ENCODE measurements at regions of chr16 and their contacts with region 1.

Region 1: GRCh38 chr16:70737377-70738082 is 51.7 kb upstream of the MTSS2 start:
- DNase-seq: peak; percentile 81 to 83
- ATAC-seq: peak; percentile 66 to 80 (median 70)
- H3K4me3 ChIP-seq: peak overlapping the region; percentile 22
- H3K27ac ChIP-seq: peak overlapping the region; percentile 98
- H3K4me1 ChIP-seq: peaks cover 54% of the 10 kb centered on the region
- H3K27me3 ChIP-seq: no peaks in the 10 kb centered on the region
- CTCF ChIP-seq: no peak

Region 2: DNA sequence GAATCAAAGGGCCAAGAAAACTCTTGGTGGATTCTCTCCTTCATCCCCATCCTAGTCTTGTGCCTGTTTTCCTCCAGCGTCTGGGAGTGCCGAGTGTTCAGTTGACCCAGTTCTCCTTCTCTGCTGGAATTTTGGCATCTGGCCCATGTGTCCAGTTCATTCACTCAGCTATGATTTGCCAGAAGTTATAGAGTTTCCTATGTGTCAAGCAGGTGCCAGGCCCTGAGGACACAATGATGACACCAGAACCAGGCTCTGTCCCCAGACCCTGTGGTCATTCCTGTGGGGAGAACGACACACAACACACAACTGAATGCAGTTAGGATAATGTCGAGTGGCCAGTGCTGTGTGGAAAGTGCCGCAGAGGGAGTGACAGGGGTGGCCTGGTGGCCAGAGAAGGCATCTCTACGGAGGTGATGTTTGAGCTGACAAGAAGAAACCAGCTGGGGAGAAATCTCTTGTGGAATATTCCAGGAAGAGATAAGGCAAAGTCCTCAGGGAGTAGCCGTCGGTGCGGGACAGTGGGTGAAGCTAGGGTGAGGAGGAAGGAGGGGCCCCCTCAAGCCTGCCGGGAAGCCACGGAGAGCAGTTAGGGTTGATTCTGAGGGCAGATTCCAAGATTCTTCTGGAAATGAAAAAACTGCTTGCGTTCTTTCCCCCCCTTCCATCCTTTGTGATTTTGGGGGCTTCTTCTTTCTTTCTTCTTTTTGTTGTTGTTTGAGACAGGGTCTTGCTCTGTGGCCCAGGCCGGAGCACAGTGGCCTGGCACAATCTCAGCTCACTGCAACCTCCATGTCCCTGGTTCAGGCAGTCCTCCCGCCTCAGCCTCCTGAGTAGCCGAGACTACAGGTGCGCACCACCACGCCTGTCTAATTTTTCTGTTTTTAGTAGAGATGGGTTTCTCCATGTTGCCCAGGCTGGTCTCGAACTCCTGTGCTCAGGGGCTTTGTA is 127.0 kb before region 1 on chr16:
- intact Hi-C with region 1: no loop called
- DNase-seq: peak; percentile 53 to 78
- ATAC-seq: peak; percentile 93 to 97 (median 94)
- H3K4me3 ChIP-seq: no peak overlapping the region
- H3K27ac ChIP-seq: peak overlapping the region; percentile 36
- H3K4me1 ChIP-seq: peaks cover 14% of the 10 kb centered on the region
- H3K27me3 ChIP-seq: no peaks in the 10 kb centered on the region
- CTCF ChIP-seq: no peak

Region 3: DNA sequence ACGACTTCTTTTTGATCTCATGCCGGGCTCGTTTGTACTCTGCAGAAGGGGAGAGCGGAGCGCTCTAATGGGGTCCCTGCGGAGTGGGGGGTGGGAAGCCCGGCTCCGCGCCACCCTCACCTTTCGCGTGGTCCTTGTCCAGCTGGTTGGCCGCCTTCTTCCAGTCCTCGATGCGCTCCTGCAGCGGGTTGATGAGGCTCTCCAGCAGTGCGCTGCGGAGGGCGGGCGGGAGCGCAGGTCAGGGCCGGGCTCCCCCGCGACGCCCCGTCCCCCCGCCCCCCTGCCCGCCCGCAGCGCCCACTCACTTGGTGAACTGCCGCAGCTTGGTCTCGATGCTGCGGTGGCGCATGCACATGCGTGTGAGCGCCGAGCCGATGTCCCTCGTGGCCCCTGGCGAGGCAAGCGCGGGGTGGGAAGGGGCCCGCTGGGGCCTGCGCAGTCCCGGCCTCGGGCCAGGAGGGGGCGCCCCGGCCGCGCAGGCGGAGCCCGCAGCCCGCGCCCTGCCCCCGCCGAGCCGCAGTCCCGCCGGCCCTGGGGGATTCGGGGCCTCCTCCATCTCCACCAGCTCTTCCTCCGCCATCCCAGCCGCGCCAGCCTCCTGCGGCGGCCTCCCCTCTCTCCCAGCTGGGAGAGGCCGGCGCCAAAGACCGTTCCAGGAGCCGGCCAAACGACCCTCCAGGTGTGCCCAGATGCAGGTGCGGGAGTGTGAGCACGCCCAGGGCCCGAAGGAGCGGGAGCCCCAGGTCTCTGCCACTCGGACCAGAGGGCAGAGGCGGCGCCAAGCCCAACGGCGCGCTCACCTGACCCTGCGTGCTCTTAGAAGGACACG is 57.6 kb before region 1 on chr16:
- intact Hi-C with region 1: loop called in 1 of 2 experiments (anchors 2 kb)
- DNase-seq: peak; percentile 47 to 72
- ATAC-seq: peak; percentile 57 to 68 (median 60)
- H3K4me3 ChIP-seq: no peak overlapping the region
- H3K27ac ChIP-seq: peak overlapping the region; percentile 61
- H3K4me1 ChIP-seq: peaks cover 38% of the 10 kb centered on the region
- H3K27me3 ChIP-seq: no peaks in the 10 kb centered on the region
- CTCF ChIP-seq: peak; percentile 58

Region 4: DNA sequence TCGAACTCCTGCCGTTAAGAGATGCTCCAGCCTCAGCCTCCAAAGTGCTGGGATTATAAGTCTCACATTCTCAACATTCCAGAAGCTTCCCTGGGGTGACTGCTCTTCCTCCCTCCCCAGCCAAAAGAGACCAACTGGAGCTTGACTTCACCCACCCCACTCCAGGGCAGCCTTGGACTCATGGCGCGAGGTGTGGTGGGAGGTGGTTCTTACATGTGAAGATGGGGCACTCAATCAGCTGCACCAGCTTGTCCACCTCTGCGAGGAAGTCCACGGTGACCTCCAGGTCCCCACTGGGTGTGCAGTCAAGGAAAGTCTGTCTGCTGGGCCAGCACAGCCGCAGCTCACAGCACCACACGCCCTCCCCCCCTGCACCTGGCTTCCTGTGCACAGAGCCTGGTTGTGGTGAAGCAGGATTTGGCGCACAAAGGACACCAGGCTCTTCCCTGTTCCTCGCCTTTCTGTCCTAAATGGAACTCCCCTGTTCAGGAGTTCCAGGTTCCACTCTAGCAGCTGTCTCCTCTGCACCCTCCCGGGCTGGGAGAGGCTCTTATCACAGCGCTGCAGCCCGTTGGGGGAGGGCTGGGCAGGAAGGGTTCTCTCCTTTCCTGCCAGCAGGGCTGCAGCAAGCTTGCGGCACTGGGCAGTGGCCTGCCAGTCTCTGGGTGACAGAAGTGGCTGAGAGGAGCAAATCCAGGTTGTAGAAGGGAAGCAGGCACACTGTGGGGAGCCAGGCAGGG is 42.0 kb before region 1 on chr16:
- intact Hi-C with region 1: loop called (anchors 5 kb)
- DNase-seq: peak; percentile 54 to 81
- ATAC-seq: peak; percentile 35 to 57 (median 44)
- H3K4me3 ChIP-seq: no peak overlapping the region
- H3K27ac ChIP-seq: peak overlapping the region; percentile 86
- H3K4me1 ChIP-seq: peaks cover 96% of the 10 kb centered on the region
- H3K27me3 ChIP-seq: no peaks in the 10 kb centered on the region
- CTCF ChIP-seq: no peak

Region 5: GRCh38 chr16:70703041-70703834 is 34.3 kb before region 1 on chr16:
- intact Hi-C with region 1: loop called (anchors 5 kb)
- DNase-seq: peak; percentile 75 to 86
- ATAC-seq: peak; percentile 68 to 80 (median 78)
- H3K4me3 ChIP-seq: no peak overlapping the region
- H3K27ac ChIP-seq: peak overlapping the region; percentile 85
- H3K4me1 ChIP-seq: peaks cover 62% of the 10 kb centered on the region
- H3K27me3 ChIP-seq: no peaks in the 10 kb centered on the region
- CTCF ChIP-seq: peak; percentile 35

Region 6: DNA sequence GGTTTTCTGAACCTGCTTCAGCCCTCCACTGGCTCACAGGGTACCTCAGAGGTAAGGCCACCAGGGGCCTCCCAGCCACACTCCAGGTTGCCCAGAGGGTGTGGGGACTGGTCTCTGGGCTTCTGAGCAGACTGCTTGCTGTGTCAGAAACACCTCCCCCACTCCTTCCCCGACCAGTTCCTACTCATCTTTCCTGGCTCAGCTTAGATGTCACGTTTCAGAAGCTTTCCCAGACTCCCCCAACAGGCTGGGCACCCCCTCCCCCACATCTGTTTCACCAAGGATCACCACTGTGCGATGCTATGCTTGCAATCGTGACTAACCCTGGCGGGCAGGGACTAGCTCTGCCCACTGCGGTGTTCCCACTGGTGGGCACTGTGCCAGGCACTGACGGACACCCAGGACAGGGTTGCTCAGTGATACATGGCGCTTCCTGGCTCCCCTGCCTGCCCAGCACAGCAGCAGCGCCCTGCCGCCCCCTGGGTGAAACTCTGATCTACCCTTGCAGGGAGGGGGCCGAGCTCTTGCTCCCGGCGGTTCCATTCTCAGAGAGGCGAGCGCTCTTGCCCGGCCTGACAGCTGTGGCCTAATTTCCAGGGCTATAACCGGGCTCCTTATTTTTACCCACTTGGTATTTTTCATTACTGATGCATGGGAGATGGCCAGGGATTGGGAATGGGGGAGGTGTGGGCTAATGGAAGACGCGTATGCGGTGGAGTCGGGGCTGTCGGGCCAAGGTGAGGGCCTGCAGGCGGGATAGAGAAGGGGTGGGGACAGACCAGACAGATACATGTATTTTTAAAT is 22.3 kb before region 1 on chr16:
- intact Hi-C with region 1: loop called (anchors 1 to 2 kb)
- DNase-seq: peak; percentile 97 to 99
- ATAC-seq: peak; percentile 87 to 93 (median 89)
- H3K4me3 ChIP-seq: peak overlapping the region; percentile 43
- H3K27ac ChIP-seq: peak overlapping the region; percentile 99
- H3K4me1 ChIP-seq: peaks cover 36% of the 10 kb centered on the region
- H3K27me3 ChIP-seq: no peaks in the 10 kb centered on the region
- CTCF ChIP-seq: no peak

Region 7: DNA sequence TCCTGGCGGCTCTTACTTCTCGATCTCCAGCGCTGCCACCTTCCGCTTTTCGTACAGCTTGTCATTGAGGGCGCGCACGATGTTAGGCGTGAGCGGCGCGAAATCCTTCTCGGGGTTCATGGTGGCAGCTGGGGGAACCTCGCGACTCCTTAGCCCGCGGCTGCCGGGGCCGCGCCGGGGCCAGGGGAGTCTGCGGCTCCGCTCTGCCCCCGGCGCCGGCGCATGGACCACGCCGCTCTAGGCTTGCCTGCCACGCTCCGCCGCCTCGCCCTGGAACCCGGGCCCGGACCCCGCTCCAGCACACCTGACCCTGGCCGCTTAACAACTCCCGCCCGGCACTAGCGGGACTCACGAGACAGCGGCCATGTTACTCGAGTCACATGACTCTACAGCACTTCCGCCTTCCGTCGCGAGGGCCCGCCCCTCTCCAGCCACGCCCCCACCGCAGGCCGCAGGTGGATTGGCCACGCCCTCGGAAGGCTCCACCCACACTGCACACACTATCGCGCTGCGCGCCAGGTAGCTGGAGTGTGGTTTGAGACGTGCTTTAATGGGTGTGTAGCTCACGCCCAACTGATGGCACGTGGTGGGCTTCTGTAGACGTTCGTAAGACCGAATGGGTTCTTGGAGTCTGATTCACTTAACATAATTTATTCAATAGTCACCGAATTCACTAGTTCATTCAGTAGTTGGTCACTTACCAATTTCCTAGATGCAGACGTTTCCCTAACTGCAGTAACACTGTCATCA is 63.4 kb after region 1 on chr16 and contains the start of gene VAC14:
- intact Hi-C with region 1: no loop called
- DNase-seq: peak; percentile 89 to 94
- ATAC-seq: peak; percentile 99 to 100 (median 100)
- H3K4me3 ChIP-seq: peak within 1 kb of the TSS; percentile 92
- H3K27ac ChIP-seq: peak within 1 kb of the TSS; percentile 70
- H3K4me1 ChIP-seq: peaks cover 10% of the 10 kb centered on the region
- H3K27me3 ChIP-seq: peaks cover 0 to 2% (median 0%) of the 10 kb centered on the region in 3 donors
- CTCF ChIP-seq: no peak
- total RNA-seq, gene VAC14: 20.0 to 24.3 (median 23.7) TPM

Region 8: GRCh38 chr16:71255721-71256120 is 518.2 kb after region 1 on chr16:
- intact Hi-C with region 1: no loop called
- DNase-seq: no peak
- ATAC-seq: peak in 2 of 4 donors; percentile 15 to 28
- H3K4me3 ChIP-seq: no peak overlapping the region
- H3K27ac ChIP-seq: no peak overlapping the region
- H3K4me1 ChIP-seq: no peaks in the 10 kb centered on the region
- H3K27me3 ChIP-seq: no peaks in the 10 kb centered on the region
- CTCF ChIP-seq: no peak

Measured in psoas muscle (tissue), 8 donors.